Calu3 (cell line): ENCODE measurements at regions of chr12 and their contacts with region 1.

Region 1: DNA sequence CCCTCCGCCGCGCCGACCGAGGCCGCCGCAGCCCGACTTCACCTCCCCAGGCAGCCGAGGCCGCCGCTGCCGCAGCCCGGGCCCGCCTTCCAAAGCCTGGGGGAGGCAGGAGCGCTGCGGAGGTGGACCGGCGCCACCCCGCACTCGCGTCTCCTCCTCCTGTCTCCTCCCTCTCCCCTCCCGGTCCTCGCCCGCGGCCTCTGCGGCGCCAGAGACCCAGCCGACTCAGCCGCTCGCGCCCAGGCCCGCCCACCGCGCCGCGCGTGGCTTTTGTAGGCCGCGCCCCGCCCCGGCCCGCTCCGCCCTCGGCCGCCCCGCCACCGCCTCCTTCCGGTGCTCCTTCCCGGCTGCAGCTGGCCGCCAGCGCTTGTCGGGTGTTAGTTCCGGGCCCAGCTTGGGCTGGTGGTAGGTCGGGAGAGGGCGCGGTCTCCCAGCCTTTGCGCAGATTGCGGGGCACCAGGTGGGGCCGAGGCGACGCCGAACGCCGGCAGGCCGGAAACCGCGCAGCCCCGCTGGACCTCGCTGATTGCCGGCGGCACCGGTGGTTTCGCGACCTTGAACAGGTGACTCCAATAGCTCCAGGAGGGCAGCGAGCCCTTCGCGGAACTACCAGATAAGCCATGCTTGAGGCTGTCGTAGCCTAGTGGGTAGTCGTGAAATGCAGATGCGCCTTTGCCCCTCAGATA is at the start of gene CAPRIN2:
- DNase-seq: peak; percentile 97
- H3K4me3 Mint-ChIP-seq: peak within 1 kb of the TSS; percentile 92
- H3K27ac Mint-ChIP-seq: peak within 1 kb of the TSS; percentile 64
- H3K4me1 Mint-ChIP-seq: peaks cover 26% of the 10 kb centered on the region
- H3K27me3 Mint-ChIP-seq: no peaks in the 10 kb centered on the region
- CTCF ChIP-seq: peak; percentile 43
- total RNA-seq, gene CAPRIN2: 48.5 and 52.2 TPM in 2 replicates

Region 2: GRCh38 chr12:30719060-30719459 is 35.8 kb before region 1 on chr12:
- CTCF ChIA-PET with region 1: interaction called, 3 read pairs
- intact Hi-C with region 1: loop called (anchors 5 kb)
- DNase-seq: no peak
- H3K4me3 Mint-ChIP-seq: no peak overlapping the region
- H3K27ac Mint-ChIP-seq: no peak overlapping the region
- H3K4me1 Mint-ChIP-seq: no peaks in the 10 kb centered on the region
- H3K27me3 Mint-ChIP-seq: no peaks in the 10 kb centered on the region
- CTCF ChIP-seq: no peak

Region 3: GRCh38 chr12:30795410-30796312 is 40.8 kb after region 1 on chr12:
- CTCF ChIA-PET with region 1: interaction called, 36 read pairs
- intact Hi-C with region 1: loop called (anchors 1 kb)
- DNase-seq: peak; percentile 85
- H3K4me3 Mint-ChIP-seq: peak overlapping the region; percentile 89
- H3K27ac Mint-ChIP-seq: peak overlapping the region; percentile 89
- H3K4me1 Mint-ChIP-seq: peaks cover 51% of the 10 kb centered on the region
- H3K27me3 Mint-ChIP-seq: no peaks in the 10 kb centered on the region
- CTCF ChIP-seq: no peak

Region 4: GRCh38 chr12:30806989-30807694 is 52.3 kb after region 1 on chr12:
- CTCF ChIA-PET with region 1: interaction called, 6 read pairs
- intact Hi-C with region 1: loop called (anchors 1 kb)
- DNase-seq: peak; percentile 42
- H3K4me3 Mint-ChIP-seq: no peak overlapping the region
- H3K27ac Mint-ChIP-seq: peak overlapping the region; percentile 43
- H3K4me1 Mint-ChIP-seq: peaks cover 11% of the 10 kb centered on the region
- H3K27me3 Mint-ChIP-seq: no peaks in the 10 kb centered on the region
- CTCF ChIP-seq: peak; percentile 43

Region 5: GRCh38 chr12:31205054-31205453 is 450.2 kb after region 1 on chr12:
- CTCF ChIA-PET with region 1: no interaction called
- intact Hi-C with region 1: loop called (anchors 5 kb)
- DNase-seq: peak; percentile 41
- H3K4me3 Mint-ChIP-seq: no peak overlapping the region
- H3K27ac Mint-ChIP-seq: peak overlapping the region; percentile 80
- H3K4me1 Mint-ChIP-seq: peaks cover 64% of the 10 kb centered on the region
- H3K27me3 Mint-ChIP-seq: no peaks in the 10 kb centered on the region
- CTCF ChIP-seq: no peak